Activated CD4-positive, alpha-beta memory T cell treated with anti-CD3 and anti-CD28 coated beads for 36 hours (primary cell): ENCODE measurements at regions of chr20 and their contacts with region 1.

Region 1: GRCh38 chr20:32779500-32780211 is 17.5 kb downstream of the DNMT3B start:
- DNase-seq: no peak
- H3K4me3 Mint-ChIP-seq: no peak overlapping the region
- H3K27ac Mint-ChIP-seq: no peak overlapping the region
- H3K4me1 Mint-ChIP-seq: peaks cover 6% of the 10 kb centered on the region
- H3K27me3 Mint-ChIP-seq: no peaks in the 10 kb centered on the region

Region 2: DNA sequence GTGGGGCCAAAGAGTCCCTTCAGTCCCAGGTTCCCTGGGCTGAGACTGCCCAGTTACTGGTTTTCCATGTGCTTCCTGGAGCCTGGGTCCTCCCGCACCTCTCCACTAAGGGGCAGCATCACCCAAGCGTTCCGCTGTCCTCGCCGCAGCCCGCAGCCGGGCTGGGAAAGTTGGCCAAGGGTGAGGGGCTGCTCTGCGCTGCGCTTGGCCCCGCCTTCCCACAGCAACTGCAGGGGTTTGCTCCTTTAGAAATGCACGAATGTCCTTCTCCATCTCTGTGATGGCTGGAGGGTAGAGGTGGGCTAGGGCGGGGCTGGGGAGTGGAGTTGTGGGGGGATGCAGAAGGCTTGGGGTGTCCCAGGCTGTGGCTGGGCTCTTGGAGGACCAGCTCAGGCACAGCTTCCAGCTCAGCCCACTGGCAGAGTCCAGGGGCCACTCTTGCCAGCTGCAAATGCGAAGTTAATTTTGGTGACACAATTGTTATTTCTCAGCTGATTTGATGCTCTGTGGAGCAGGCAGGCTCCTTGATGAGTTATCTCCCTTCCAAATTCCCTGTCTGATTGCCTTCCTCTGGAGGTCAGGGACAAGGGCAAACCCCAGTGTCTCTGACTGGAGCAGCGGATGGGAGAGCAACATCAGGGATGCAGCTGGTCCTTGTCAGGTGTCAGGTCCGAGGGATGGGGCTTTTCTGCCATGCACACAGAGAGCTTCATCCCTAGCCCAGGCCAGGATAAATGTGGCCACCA is 257.7 kb before region 1 on chr20:
- CTCF ChIA-PET with region 1: interaction called, 18 read pairs
- POLR2A ChIA-PET with region 1: no interaction called
- intact Hi-C with region 1: no loop called
- DNase-seq: peak; percentile 78
- H3K4me3 Mint-ChIP-seq: no peak overlapping the region
- H3K27ac Mint-ChIP-seq: peak overlapping the region; percentile 58
- H3K4me1 Mint-ChIP-seq: peaks cover 47% of the 10 kb centered on the region
- H3K27me3 Mint-ChIP-seq: no peaks in the 10 kb centered on the region

Region 3: DNA sequence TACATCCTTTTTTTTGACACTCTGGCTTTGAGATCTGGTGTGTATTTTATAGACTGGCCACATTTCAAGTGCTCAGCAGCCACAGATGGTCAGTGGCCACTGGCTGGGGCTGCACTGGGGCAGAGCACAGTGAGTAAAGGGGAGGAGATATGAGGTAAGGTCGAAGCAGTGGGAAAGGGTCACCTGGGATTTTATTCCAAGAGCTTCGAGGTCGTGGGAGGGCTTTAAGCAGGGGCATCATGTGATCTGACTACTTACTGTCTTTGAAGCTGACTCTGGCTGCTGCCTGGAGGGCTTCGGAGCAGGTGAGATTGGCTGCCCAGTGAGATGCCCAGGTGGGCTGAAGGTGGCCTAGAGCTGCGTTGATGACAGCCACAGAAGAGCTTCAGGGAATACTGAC is 112.6 kb before region 1 on chr20:
- CTCF ChIA-PET with region 1: interaction called, 330 read pairs
- POLR2A ChIA-PET with region 1: no interaction called
- intact Hi-C with region 1: no loop called
- DNase-seq: no peak
- H3K4me3 Mint-ChIP-seq: no peak overlapping the region
- H3K27ac Mint-ChIP-seq: no peak overlapping the region
- H3K4me1 Mint-ChIP-seq: no peaks in the 10 kb centered on the region
- H3K27me3 Mint-ChIP-seq: peaks cover 1% of the 10 kb centered on the region

Region 4: GRCh38 chr20:32681175-32682084 is 98.2 kb before region 1 on chr20:
- CTCF ChIA-PET with region 1: interaction called, 330 read pairs
- POLR2A ChIA-PET with region 1: interaction called, 3 read pairs
- intact Hi-C with region 1: no loop called
- DNase-seq: peak; percentile 25
- H3K4me3 Mint-ChIP-seq: no peak overlapping the region
- H3K27ac Mint-ChIP-seq: no peak overlapping the region
- H3K4me1 Mint-ChIP-seq: peaks cover 2% of the 10 kb centered on the region
- H3K27me3 Mint-ChIP-seq: no peaks in the 10 kb centered on the region

Region 5: DNA sequence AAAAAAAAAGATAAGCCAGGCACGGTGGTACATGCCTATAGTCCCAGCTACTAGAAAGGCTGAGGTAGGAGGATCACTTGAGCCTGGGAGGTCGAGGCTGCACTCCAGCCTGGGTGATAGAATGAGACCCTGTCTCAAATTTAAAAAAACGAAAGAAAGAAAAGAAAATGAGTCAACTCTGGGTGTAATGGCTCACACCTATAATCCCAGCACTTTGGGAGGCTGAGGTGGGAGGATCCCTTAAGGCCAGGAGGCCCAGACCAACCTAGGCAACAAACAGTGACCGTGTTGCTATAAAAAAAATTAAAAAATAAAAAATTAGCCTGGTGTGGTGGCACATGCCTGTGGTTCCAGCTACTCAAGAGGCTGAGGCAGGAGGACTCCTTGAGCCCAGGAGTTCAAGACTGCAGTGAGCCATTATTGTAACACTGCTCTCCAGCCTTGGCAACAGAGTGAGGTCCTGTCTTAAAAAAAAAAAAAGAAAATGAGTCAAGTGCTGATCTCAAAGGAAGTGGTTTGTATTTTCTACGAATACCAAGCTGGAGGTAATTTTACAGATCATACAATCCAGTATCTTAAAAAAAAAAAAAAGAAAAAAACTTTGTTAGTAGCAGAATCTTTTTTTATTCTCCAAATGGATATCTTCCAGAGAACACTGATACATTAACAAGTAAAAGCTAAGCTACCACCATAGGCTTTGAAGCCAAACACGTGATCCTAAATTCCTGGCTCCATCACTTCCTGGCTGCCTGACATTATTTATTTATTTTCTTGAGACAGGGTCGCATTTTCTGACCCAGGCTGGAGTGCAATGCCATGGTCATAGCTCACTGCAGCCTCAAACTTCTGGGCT is 42.1 kb before region 1 on chr20:
- CTCF ChIA-PET with region 1: interaction called, 35 read pairs
- POLR2A ChIA-PET with region 1: no interaction called
- intact Hi-C with region 1: loop called (anchors 5 kb)
- DNase-seq: peak; percentile 61
- H3K4me3 Mint-ChIP-seq: no peak overlapping the region
- H3K27ac Mint-ChIP-seq: peak overlapping the region; percentile 86
- H3K4me1 Mint-ChIP-seq: peaks cover 45% of the 10 kb centered on the region
- H3K27me3 Mint-ChIP-seq: no peaks in the 10 kb centered on the region

Region 6: GRCh38 chr20:32762149-32762753 is 17.4 kb before region 1 on chr20 and contains the start of gene DNMT3B:
- CTCF ChIA-PET with region 1: interaction called, 37 read pairs
- POLR2A ChIA-PET with region 1: no interaction called
- intact Hi-C with region 1: no loop called
- DNase-seq: peak; percentile 81
- H3K4me3 Mint-ChIP-seq: peak within 1 kb of the TSS; percentile 79
- H3K27ac Mint-ChIP-seq: no peak within 1 kb of the TSS
- H3K4me1 Mint-ChIP-seq: peaks cover 9% of the 10 kb centered on the region
- H3K27me3 Mint-ChIP-seq: peaks cover 1% of the 10 kb centered on the region
- total RNA-seq, gene DNMT3B: 1.7 to 2.0 TPM

Region 7: GRCh38 chr20:32789896-32790750 is 10.5 kb after region 1 on chr20:
- CTCF ChIA-PET with region 1: interaction called, 86 read pairs
- POLR2A ChIA-PET with region 1: no interaction called
- intact Hi-C with region 1: no loop called
- DNase-seq: peak; percentile 79
- H3K4me3 Mint-ChIP-seq: no peak overlapping the region
- H3K27ac Mint-ChIP-seq: no peak overlapping the region
- H3K4me1 Mint-ChIP-seq: peaks cover 31% of the 10 kb centered on the region
- H3K27me3 Mint-ChIP-seq: no peaks in the 10 kb centered on the region

Region 8: DNA sequence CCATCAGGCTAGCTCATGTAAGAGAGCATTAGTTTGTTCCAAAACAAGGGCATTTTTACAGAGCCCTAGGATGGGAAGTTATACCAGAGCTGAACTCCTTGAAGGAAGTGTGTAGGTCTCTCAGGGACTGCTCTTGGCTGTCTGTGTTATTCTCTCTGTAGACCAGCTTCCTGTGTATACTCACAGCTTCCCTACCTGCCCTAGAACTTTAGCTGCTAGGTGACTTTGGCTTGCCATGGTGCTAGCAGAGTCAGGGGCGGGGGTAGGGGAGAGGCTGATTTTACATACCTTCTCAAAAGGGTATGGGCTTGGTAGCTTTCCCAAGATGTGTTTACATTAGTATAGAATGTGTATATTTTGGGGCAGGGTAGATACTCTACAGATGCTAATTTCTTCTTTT is 57.5 kb after region 1 on chr20:
- CTCF ChIA-PET with region 1: no interaction called
- POLR2A ChIA-PET with region 1: no interaction called
- intact Hi-C with region 1: no loop called
- DNase-seq: no peak
- H3K4me3 Mint-ChIP-seq: no peak overlapping the region
- H3K27ac Mint-ChIP-seq: no peak overlapping the region
- H3K4me1 Mint-ChIP-seq: peaks cover 53% of the 10 kb centered on the region
- H3K27me3 Mint-ChIP-seq: no peaks in the 10 kb centered on the region

Region 9: GRCh38 chr20:33076662-33077372 is 297.2 kb after region 1 on chr20:
- CTCF ChIA-PET with region 1: no interaction called
- POLR2A ChIA-PET with region 1: no interaction called
- intact Hi-C with region 1: no loop called
- DNase-seq: peak; percentile 18
- H3K4me3 Mint-ChIP-seq: no peak overlapping the region
- H3K27ac Mint-ChIP-seq: no peak overlapping the region
- H3K4me1 Mint-ChIP-seq: peaks cover 3% of the 10 kb centered on the region
- H3K27me3 Mint-ChIP-seq: no peaks in the 10 kb centered on the region